ENCODE measurements at regions of chr10 and their contacts with region 1.

Region 1: DNA sequence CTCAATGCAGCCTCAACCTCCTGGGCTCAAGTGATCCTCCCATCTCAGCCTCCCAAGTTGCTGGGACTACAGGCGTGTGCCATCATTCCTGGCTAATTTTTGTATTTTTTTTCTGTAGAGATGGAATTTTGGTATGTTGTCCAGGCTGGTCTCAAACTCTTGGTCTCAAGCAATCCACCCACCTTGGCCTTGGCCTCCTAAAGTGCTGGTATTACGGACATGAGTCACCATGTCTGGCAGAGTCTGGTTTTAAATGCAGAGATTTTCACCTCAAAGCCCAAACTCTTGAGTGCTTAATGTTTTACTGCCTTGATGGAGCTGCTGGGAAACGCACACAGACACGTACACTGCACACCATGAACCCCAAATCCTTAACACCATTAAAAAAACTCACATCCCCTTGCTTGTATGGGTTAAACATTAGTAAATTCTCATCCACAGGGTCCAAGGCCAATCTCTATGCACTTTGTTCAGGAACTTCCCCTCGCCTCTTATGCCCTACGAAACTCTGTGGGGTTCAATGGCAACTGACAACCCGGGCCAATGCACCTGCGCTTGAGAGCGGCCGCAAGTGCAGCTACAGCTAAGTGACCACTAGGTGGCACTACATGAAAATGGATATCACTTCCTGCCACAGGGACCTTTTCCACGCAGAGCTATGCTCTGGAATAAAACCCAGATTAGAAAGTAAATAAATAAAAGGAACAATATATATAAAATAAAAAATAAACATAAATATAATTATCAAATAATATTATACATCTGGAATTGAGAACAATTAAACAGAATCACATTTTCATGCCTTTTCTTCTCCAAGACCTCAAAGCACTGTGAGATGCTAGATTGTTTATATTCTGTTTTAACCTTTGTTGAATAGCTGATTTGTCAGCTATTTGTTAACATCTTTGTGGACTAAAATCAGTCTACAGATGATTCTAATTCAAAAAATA is 66.9 kb upstream of the AFAP1L2 start:
- DNase-seq: peak; percentile 75
- H3K4me3 Mint-ChIP-seq: no peak overlapping the region
- H3K27ac Mint-ChIP-seq: no peak overlapping the region
- H3K4me1 Mint-ChIP-seq: peaks cover 6% of the 10 kb centered on the region
- H3K27me3 Mint-ChIP-seq: no peaks in the 10 kb centered on the region
- CTCF ChIP-seq: peak; percentile 80

Region 2: GRCh38 chr10:114486938-114487814 is 15.9 kb after region 1 on chr10:
- CTCF ChIA-PET with region 1: interaction called, 26 read pairs
- POLR2A ChIA-PET with region 1: interaction called, 4 read pairs
- intact Hi-C with region 1: no loop called
- DNase-seq: peak; percentile 37
- H3K4me3 Mint-ChIP-seq: no peak overlapping the region
- H3K27ac Mint-ChIP-seq: no peak overlapping the region
- H3K4me1 Mint-ChIP-seq: peaks cover 16% of the 10 kb centered on the region
- H3K27me3 Mint-ChIP-seq: no peaks in the 10 kb centered on the region
- CTCF ChIP-seq: no peak

Region 3: DNA sequence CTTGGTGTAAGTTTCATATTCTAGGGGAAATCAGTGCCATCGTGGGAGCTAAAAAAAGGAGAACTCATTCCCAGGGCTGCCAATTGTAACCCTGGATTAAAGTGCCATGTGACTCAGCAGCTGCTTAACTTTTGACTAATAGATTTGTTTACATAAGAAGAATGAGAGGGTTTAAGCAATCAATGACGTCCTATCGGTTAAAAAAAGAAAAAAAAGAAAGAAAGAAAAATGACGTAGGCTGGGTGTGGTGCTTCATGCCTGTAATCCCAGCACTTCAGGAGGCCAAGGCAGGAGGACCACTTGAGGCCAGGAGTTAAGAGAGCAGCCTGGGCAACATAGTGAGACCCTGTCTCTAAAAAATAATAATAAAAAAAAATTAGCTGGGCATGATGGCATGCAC is 49.2 kb after region 1 on chr10:
- CTCF ChIA-PET with region 1: interaction called, 33 read pairs
- POLR2A ChIA-PET with region 1: interaction called, 11 read pairs
- intact Hi-C with region 1: no loop called
- DNase-seq: peak; percentile 93
- H3K4me3 Mint-ChIP-seq: peak overlapping the region; percentile 13
- H3K27ac Mint-ChIP-seq: peak overlapping the region; percentile 84
- H3K4me1 Mint-ChIP-seq: peaks cover 53% of the 10 kb centered on the region
- H3K27me3 Mint-ChIP-seq: no peaks in the 10 kb centered on the region
- CTCF ChIP-seq: no peak

Region 4: GRCh38 chr10:114703377-114704107 is 232.3 kb after region 1 on chr10:
- CTCF ChIA-PET with region 1: interaction called, 7 read pairs
- POLR2A ChIA-PET with region 1: no interaction called
- intact Hi-C with region 1: loop called (anchors 1 kb)
- DNase-seq: peak; percentile 48
- H3K4me3 Mint-ChIP-seq: no peak overlapping the region
- H3K27ac Mint-ChIP-seq: no peak overlapping the region
- H3K4me1 Mint-ChIP-seq: peaks cover 19% of the 10 kb centered on the region
- H3K27me3 Mint-ChIP-seq: no peaks in the 10 kb centered on the region
- CTCF ChIP-seq: peak; percentile 81

Region 5: DNA sequence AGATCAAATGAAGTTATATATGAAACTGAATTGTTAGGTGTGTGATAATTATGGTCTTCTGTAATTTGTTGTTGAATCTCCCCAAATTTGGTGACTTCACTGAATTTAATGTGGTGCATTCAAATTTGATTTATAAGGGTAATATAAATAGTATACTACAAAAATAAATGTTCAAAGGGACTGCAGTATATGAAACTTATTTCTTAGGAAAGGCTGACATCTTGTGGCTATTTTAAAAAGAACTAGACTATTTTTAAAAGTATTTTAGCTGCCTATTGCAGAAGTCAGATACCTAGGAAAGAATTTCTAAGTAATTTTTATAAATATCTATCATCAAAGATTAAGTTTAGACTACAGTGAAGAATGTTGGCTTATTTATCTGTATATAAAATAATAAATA is 658.5 kb after region 1 on chr10:
- CTCF ChIA-PET with region 1: no interaction called
- POLR2A ChIA-PET with region 1: interaction called, 3 read pairs
- intact Hi-C with region 1: loop called (anchors 10 kb)
- DNase-seq: peak; percentile 26
- H3K4me3 Mint-ChIP-seq: no peak overlapping the region
- H3K27ac Mint-ChIP-seq: no peak overlapping the region
- H3K4me1 Mint-ChIP-seq: no peaks in the 10 kb centered on the region
- H3K27me3 Mint-ChIP-seq: peaks cover 14% of the 10 kb centered on the region
- CTCF ChIP-seq: peak; percentile 46

Region 6: DNA sequence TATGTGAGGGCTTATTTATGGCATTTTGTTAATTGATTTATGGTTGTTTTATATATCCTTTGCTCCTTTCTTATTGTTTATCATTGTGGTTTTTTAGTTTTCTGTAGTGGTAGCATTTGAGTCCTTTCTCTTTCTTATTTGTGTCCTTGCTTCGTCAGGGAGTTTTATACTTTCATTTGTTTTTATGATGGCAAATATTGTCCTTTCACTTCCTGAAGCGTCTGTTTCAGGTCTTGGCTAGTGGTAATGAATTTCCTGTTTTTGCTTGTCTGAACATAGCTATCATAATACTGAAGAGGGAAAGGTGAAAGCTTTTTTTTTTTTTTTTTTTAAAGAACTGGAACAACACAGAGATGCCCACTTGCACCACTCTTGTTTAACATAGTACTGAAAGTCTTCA is 850.1 kb after region 1 on chr10:
- CTCF ChIA-PET with region 1: no interaction called
- POLR2A ChIA-PET with region 1: no interaction called
- intact Hi-C with region 1: no loop called
- DNase-seq: no peak
- H3K4me3 Mint-ChIP-seq: no peak overlapping the region
- H3K27ac Mint-ChIP-seq: no peak overlapping the region
- H3K4me1 Mint-ChIP-seq: no peaks in the 10 kb centered on the region
- H3K27me3 Mint-ChIP-seq: peaks cover 57% of the 10 kb centered on the region
- CTCF ChIP-seq: no peak

Measured in MCF 10A (cell line).